Dendritic cell treated with granulocyte-macrophage colony-stimulating factor and Interleukin-4, amounts not matched to agents 40 ng/mL and 50 ng/mL, for 4 days (primary cell): ENCODE measurements at regions of chr9 and their contacts with region 1.

Region 1: DNA sequence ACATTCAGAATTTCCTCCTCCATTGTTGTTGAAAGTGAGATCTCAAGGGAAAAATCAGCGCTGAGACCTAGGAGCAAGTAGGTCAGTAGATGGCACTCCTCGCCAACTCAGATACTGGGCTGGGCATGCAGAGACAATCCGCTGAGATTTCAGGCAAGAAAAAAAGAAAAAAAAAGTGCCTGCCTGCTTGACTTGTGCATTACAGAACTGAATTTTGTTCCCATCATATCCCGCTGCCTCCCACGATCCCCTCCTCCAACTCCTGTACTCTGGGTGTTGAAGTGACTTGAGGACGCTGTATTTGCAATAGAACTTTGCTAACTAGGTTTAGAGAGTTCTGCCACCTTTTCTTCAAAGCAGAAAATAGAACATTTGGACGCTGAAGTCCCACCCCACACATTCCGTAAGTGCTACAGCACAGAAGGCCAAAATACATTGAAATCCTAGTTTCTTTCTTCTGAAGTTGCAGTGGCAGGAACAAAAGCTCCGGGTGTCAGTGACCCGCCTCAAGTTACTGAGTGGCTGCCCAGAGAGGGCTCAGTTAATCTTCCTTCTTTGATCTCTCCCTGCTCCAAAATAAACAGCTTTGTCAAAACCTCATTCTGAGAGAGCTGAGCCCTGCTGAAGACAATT is 265.8 kb downstream of the MLLT3 start:
- H3K4me3 Mint-ChIP-seq: no peak overlapping the region
- H3K27ac Mint-ChIP-seq: no peak overlapping the region
- H3K4me1 Mint-ChIP-seq: peaks cover 4% of the 10 kb centered on the region
- H3K27me3 Mint-ChIP-seq: no peaks in the 10 kb centered on the region

Region 2: GRCh38 chr9:19925817-19926503 is 430.6 kb before region 1 on chr9:
- intact Hi-C with region 1: loop called (anchors 5 kb)
- H3K4me3 Mint-ChIP-seq: peak overlapping the region; percentile 55
- H3K27ac Mint-ChIP-seq: peak overlapping the region; percentile 50
- H3K4me1 Mint-ChIP-seq: peaks cover 22% of the 10 kb centered on the region
- H3K27me3 Mint-ChIP-seq: peaks cover 16% of the 10 kb centered on the region